ENCODE measurements at regions of chr1 and their contacts with region 1.

Region 1: GRCh38 chr1:1069709-1070676 is 4.1 kb downstream of the RNF223 start:
- DNase-seq: peak; percentile 86 to 88
- H3K4me3 ChIP-seq: peak overlapping the region; percentile 86
- H3K27ac ChIP-seq: peak overlapping the region; percentile 87
- H3K4me1 ChIP-seq: peaks cover 52% of the 10 kb centered on the region
- H3K27me3 ChIP-seq: no peaks in the 10 kb centered on the region
- CTCF ChIP-seq: no peak

Region 2: DNA sequence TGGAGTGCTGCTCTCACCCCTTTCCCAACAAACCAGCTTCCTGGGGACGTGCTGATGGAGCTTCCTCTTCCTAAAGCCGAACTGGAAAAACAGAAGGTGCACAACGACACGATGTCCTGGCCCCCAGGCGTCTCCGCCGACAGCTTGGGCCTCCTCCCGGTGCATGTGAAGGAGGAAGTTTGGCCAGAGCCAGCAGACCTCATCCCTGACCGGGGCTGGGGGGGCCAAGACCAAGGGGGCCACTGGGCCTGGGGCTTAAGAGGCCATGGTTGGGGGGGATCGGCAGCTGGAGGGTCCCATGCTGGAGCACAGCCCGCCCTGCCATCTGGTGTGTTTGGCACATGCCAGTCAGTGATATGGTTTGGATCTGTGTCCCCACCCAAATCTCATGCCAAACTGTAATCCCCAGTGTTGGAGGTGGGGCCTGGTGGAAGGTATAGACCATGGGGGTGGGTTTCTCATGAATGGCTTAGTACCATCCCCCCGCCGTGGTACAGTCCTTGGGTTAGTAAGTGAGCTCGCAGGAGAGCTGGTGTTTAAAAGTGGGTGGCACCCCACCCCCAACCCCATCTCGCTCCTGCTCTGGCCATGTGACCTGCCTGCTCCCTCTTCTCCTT is 76.5 kb before region 1 on chr1:
- CTCF ChIA-PET with region 1: interaction called, 14 read pairs
- POLR2A ChIA-PET with region 1: no interaction called
- intact Hi-C with region 1: no loop called
- DNase-seq: no peak
- H3K4me3 ChIP-seq: no peak overlapping the region
- H3K27ac ChIP-seq: no peak overlapping the region
- H3K4me1 ChIP-seq: no peaks in the 10 kb centered on the region
- H3K27me3 ChIP-seq: no peaks in the 10 kb centered on the region
- CTCF ChIP-seq: no peak

Region 3: DNA sequence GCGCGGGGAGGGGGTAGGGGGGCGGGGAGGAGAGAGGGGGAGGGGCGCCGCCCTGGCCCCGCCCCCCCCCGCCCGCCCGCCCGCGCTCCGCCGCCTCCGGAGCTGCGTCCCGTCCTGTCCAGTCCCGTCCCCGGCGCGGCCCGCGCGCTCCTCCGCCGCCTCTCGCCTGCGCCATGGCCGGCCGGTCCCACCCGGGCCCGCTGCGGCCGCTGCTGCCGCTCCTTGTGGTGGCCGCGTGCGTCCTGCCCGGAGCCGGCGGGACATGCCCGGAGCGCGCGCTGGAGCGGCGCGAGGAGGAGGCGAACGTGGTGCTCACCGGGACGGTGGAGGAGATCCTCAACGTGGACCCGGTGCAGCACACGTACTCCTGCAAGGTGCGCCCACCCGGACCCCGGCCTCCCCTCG is 50.0 kb before region 1 on chr1 and contains the start of gene AGRN:
- CTCF ChIA-PET with region 1: interaction called, 6 read pairs
- POLR2A ChIA-PET with region 1: no interaction called
- intact Hi-C with region 1: loop called (anchors 5 kb)
- DNase-seq: peak in 1 of 2 experiments; percentile 57
- H3K4me3 ChIP-seq: peak within 1 kb of the TSS; percentile 80
- H3K27ac ChIP-seq: peak within 1 kb of the TSS; percentile 76
- H3K4me1 ChIP-seq: peaks cover 32% of the 10 kb centered on the region
- H3K27me3 ChIP-seq: no peaks in the 10 kb centered on the region
- CTCF ChIP-seq: no peak
- total RNA-seq, gene AGRN: 278 and 381 TPM in 2 replicates

Region 4: DNA sequence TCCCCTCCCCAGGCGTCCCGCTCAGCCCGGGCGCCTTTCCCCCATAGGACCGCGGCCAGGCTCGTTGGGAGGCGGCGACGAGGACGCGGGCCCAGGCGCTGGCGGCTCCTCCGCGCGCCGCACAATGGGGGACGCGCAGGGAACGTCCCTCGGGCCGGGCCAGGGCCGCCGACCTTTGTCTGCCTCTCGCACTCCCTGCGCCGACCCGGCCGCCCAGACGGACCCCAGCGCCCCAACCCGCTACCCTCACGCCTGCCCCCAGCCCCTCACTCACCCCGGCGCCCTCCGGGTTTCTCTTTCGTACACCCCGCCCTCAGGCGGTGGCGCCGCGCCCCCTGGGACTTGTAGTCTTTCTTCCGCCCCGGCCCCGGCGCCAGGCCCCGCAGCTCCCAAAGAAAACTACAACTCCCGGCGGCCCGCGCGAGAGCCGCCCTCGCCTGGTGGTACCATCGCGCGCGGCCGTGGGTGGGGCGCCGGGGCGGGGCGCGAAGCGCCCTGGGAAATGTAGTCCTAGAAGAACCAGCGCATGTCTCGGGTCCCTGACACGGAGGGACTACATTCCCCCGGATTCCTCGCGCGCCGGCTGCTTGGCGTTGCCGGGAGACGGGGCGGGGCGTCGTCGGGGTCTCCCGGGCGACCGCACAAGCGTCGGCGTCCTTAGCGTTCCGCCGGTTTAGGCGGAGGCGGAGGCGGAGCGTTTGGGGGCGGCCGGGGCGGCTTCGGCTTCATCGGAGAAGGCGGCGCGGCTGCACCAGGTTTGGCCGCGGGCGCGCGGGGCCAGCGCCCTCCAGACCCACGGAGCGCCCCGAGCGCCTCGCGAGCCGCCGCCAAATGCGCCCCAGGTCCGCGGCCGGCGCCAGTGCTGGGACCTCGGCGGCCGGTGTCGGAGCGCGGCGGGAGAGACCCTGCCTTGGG is 46.0 kb after region 1 on chr1 and contains the start of gene C1orf159:
- CTCF ChIA-PET with region 1: no interaction called
- POLR2A ChIA-PET with region 1: no interaction called
- intact Hi-C with region 1: loop called (anchors 2 kb)
- DNase-seq: peak; percentile 90 to 99
- H3K4me3 ChIP-seq: peak within 1 kb of the TSS; percentile 75
- H3K27ac ChIP-seq: no peak within 1 kb of the TSS
- H3K4me1 ChIP-seq: peaks cover 7% of the 10 kb centered on the region
- H3K27me3 ChIP-seq: no peaks in the 10 kb centered on the region
- CTCF ChIP-seq: no peak
- total RNA-seq, gene C1orf159: 26.6 and 31.1 TPM in 2 replicates

Region 5: DNA sequence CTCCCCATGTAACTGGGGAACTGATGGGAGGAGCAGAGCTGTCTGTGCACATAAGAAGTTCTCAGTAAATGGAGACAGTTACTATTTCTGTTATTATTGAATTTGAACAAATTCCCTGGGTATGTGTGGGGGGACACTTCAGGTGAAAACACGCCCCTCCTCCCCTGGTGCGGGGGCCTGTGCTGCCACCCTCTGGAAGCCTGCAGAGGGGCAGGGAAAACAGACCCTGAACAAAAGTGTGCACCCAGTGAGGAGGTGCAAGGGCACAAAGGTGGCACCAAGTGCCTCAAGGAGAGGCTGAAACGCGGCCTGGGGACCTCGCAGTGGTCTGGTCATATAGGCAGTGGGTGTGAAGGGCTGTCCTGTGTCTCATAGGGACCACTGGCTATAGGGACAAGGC is 726.5 kb after region 1 on chr1:
- CTCF ChIA-PET with region 1: no interaction called
- POLR2A ChIA-PET with region 1: no interaction called
- intact Hi-C with region 1: no loop called
- DNase-seq: no peak
- H3K4me3 ChIP-seq: no peak overlapping the region
- H3K27ac ChIP-seq: no peak overlapping the region
- H3K4me1 ChIP-seq: no peaks in the 10 kb centered on the region
- H3K27me3 ChIP-seq: no peaks in the 10 kb centered on the region
- CTCF ChIP-seq: peak; percentile 50

Measured in PC-9 (cell line).